ENCODE measurements at regions of chr5 and their contacts with region 1.

Region 1: DNA sequence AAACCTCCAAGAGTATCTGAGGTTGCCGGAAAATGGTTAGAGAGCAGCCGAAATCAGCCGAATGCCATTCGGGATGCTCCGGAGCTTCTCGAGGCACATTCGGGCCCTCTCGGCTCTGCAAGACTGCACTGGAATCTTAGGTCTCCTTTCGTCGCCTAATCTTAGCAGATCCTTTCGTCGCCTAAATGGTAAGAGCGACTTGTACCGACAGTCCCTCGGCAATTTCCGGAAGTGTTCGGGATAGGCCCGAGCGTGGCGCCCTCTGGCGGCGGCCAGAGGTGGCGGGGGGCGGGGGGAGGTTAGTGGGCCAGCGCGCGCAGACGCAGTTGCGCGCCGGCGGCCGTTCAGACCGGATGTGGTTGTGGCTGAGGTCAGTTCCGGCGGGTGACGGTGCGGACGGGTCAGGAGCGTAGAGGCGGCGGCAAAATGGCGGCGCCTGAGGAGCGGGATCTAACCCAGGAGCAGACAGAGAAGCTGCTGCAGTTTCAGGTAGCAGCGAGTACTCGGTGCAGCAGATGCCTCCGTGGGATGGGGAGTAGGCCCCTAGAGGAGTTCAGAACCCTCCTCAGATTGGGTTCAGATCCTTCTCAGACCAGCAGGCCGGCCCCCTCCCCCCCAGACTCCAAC is at the start of gene FAF2:
- DNase-seq: peak; percentile 97 to 100 (median 99)
- H3K4me3 ChIP-seq: peak within 1 kb of the TSS; percentile 95 to 100
- H3K4me3 Mint-ChIP-seq: peak within 1 kb of the TSS; percentile 97 to 100 (median 98)
- H3K27ac ChIP-seq: peak within 1 kb of the TSS; percentile 98
- H3K27ac Mint-ChIP-seq: peak within 1 kb of the TSS; percentile 98 to 100 (median 99)
- H3K4me1 ChIP-seq: peaks cover 42% of the 10 kb centered on the region
- H3K4me1 Mint-ChIP-seq: peaks cover 21 to 51% (median 36%) of the 10 kb centered on the region in 4 donors
- H3K27me3 ChIP-seq: no peaks in the 10 kb centered on the region
- H3K27me3 Mint-ChIP-seq: peaks cover 0 to 2% of the 10 kb centered on the region in 2 donors
- total RNA-seq, gene FAF2: 32.3 to 33.6 TPM

Region 2: GRCh38 chr5:176201811-176202210 is 246.3 kb before region 1 on chr5:
- CTCF ChIA-PET with region 1: no interaction called
- POLR2A ChIA-PET with region 1: no interaction called
- intact Hi-C with region 1: no loop called
- DNase-seq: no peak
- H3K4me3 ChIP-seq: no peak overlapping the region
- H3K4me3 Mint-ChIP-seq: no peak overlapping the region
- H3K27ac ChIP-seq: no peak overlapping the region
- H3K27ac Mint-ChIP-seq: no peak overlapping the region
- H3K4me1 ChIP-seq: no peaks in the 10 kb centered on the region
- H3K4me1 Mint-ChIP-seq: peaks cover 1 to 7% (median 3%) of the 10 kb centered on the region in 4 donors
- H3K27me3 ChIP-seq: no peaks in the 10 kb centered on the region
- H3K27me3 Mint-ChIP-seq: peaks cover 8 to 15% of the 10 kb centered on the region in 2 donors

Region 3: DNA sequence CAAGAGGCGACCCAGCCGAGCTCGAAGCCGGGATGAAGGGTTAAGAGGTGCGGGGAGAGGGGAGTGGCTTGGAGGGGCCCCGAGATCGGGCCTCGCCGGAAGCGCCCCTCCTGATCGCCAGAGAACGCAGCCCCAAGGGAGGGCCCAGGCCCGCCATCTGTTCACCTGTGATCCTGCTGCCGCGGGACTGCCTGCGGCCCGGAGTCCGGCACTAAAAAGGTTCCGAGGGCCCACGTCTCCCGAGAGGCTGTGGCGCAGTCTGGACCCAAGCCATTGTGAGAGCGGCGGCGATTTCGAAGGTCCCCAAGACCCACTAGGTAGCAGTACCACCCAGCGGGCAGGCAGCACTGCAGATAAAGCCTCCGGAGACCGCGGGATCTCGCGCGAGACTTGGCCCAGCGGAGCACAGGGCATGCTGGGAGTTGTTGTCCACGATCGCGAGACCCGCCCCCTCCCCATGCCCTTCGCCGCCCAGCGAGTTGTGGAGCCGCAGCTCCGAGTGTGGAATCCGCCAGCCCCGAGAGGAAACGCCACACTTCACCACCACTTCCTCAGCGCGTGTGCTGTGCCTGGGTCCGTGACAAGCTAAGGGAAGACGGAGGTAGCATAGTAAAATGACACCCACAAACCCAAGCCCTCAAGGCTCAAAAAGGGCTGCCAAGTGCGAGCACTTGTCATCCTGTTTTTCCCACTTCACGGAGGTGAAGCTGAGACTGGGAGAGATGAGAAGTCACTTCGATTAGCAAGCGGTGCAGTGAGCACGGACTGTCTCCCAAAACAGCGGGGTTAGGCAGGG is 86.5 kb before region 1 on chr5 and contains the start of gene KIAA1191:
- CTCF ChIA-PET with region 1: interaction called, 3 read pairs
- POLR2A ChIA-PET with region 1: interaction called, 5 read pairs
- intact Hi-C with region 1: loop called (anchors 1 kb)
- DNase-seq: peak; percentile 93 to 97 (median 94)
- H3K4me3 ChIP-seq: peak within 1 kb of the TSS; percentile 91 to 97
- H3K4me3 Mint-ChIP-seq: peak within 1 kb of the TSS; percentile 97 to 99 (median 98)
- H3K27ac ChIP-seq: peak within 1 kb of the TSS; percentile 78
- H3K27ac Mint-ChIP-seq: peak within 1 kb of the TSS; percentile 92 to 98 (median 97)
- H3K4me1 ChIP-seq: peaks cover 39% of the 10 kb centered on the region
- H3K4me1 Mint-ChIP-seq: peaks cover 27 to 57% (median 42%) of the 10 kb centered on the region in 4 donors
- H3K27me3 ChIP-seq: no peaks in the 10 kb centered on the region
- H3K27me3 Mint-ChIP-seq: no peaks in the 10 kb centered on the region
- total RNA-seq, gene KIAA1191: 73.3 to 76.6 TPM

Region 4: DNA sequence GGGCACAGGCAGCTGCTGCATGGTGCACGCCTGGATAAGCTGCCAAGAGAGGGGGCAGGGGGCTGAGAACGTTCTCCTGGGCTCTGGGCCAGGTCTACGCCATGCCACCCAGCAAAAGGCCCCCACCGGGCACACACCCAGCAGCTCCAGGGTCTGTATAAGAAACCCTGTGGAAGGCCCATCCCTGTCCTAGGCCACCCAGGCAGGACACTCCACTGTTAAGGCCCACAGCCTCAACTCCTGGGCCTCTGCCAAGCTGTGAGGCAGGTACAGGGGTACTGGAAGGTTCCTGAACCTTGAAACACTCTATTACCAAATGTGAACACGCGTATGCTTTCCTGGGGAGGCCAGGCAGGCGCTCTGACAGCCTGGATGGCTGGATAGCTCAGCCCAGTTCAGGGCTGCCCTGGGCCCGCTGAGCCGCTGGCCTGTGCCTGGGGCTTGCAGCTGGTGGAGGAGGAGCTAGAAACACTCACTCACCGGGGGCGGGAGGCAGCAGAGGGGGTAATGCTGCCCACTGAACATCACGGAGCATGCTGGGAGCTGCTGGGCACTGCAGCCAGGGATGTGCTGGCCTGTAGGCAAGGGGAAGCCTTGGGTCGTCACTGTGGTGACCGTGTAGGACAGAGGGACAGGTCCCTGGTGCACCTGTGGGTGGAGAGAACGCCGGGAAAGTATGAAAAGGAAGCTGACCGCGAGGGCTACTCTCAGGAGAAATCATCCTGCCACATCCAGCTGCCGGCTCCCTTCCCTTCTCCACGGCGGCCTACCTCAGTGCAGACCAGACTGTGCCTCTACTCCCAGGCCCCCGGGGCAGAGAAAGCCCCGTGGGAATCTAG is 83.1 kb after region 1 on chr5:
- CTCF ChIA-PET with region 1: interaction called, 18 read pairs
- POLR2A ChIA-PET with region 1: interaction called, 98 read pairs
- intact Hi-C with region 1: no loop called
- DNase-seq: peak in 2 of 5 donors; percentile 15 to 41
- H3K4me3 ChIP-seq: peak overlapping the region; percentile 15 to 20
- H3K4me3 Mint-ChIP-seq: peak overlapping the region; percentile 71 to 92 (median 80)
- H3K27ac ChIP-seq: peak overlapping the region; percentile 40
- H3K27ac Mint-ChIP-seq: peak overlapping the region; percentile 61 to 93 (median 86)
- H3K4me1 ChIP-seq: peaks cover 75% of the 10 kb centered on the region
- H3K4me1 Mint-ChIP-seq: peaks cover 26 to 62% (median 43%) of the 10 kb centered on the region in 4 donors
- H3K27me3 ChIP-seq: no peaks in the 10 kb centered on the region
- H3K27me3 Mint-ChIP-seq: no peaks in the 10 kb centered on the region

Region 5: DNA sequence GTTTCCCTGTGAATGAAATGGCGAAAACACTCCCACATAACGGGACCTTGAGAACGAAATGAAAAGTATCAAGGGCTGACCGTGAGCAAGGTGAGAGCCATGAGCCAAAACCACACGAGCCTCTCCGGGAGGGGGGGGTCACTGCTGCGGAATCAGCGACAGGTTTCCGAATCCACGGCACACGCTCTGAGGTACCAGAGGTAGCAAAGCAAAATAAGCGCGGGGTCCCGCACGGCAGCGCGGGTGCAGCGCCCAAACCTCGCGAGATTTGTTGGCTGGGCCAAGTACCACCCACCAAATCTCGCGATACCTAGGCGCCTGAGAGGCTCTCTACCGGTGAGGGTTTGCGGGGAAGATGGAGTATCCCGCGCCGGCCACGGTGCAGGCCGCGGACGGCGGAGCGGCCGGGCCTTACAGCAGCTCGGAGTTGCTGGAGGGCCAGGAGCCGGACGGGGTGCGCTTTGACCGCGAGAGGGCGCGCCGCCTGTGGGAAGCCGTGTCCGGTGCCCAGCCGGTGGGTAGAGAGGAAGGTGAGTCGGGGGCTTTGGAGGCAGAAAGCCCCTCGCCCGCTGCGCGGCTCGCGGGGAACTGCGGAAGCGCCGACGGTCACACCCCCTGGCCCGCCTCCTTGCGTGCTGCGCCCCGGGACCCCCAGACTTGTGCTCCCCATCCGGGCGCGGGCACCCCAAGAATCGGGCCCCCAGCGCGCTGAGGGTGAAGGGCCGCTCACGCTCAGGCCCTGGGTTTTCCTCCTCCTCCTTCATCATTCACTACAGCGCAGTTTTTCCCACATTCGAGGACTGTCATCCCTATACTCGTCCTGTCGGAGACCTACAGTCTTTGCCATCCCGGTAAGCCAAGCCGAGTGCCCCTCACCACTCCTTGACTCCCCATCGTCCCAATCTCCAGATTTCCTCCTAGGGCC is 574.6 kb after region 1 on chr5 and contains the start of gene ZNF346:
- CTCF ChIA-PET with region 1: no interaction called
- POLR2A ChIA-PET with region 1: no interaction called
- intact Hi-C with region 1: no loop called
- DNase-seq: peak; percentile 90 to 94 (median 92)
- H3K4me3 ChIP-seq: peak within 1 kb of the TSS; percentile 74 to 86
- H3K4me3 Mint-ChIP-seq: peak within 1 kb of the TSS; percentile 91 to 99 (median 98)
- H3K27ac ChIP-seq: peak within 1 kb of the TSS; percentile 91
- H3K27ac Mint-ChIP-seq: peak within 1 kb of the TSS; percentile 94 to 99 (median 98)
- H3K4me1 ChIP-seq: peaks cover 31% of the 10 kb centered on the region
- H3K4me1 Mint-ChIP-seq: peaks cover 27 to 45% (median 36%) of the 10 kb centered on the region in 4 donors
- H3K27me3 ChIP-seq: no peaks in the 10 kb centered on the region
- H3K27me3 Mint-ChIP-seq: no peaks in the 10 kb centered on the region
- total RNA-seq, gene ZNF346: 24.0 to 29.1 TPM

Measured in CD4-positive, alpha-beta memory T cell (primary cell).